Stomach (tissue), 19 donors: ENCODE measurements at regions of chr17 and their contacts with region 1.

Region 1: GRCh38 chr17:34163646-34164045 is 91.4 kb upstream of the CCL2 start:
- DNase-seq: peak in 1 of 2 donors; percentile 61
- H3K4me3 ChIP-seq: no peak overlapping the region
- H3K27ac ChIP-seq: peak overlapping the region in 1 of 5 donors; percentile 64
- H3K4me1 ChIP-seq: peaks cover 0 to 15% (median 10%) of the 10 kb centered on the region in 4 donors
- H3K27me3 ChIP-seq: peaks cover 0 to 69% (median 7%) of the 10 kb centered on the region in 3 donors
- CTCF ChIP-seq: peak in 4 of 7 experiments; percentile 10 to 23 (median 16)
- EP300 ChIP-seq: no peak
- POLR2A ChIP-seq: no peak

Region 2: DNA sequence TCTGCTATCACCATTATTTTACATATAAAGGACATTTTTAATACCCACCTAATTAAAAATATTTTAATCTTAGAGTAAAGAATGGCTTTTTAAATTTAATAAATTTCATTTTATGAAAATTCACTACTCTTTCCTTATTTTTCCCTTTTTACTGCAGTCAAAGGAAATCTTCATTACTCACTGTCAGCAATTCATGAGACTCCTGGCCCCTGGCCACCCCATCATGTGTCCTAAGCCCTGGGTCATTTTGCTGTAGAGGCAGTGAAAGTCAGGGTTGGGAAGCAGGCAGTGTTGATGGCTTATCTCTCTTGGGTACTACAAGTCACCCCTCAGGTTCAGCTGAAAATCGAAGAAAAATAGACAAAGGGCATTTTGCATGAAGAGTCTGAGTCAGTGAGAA is 377.2 kb before region 1 on chr17:
- intact Hi-C with region 1: loop called (anchors 10 kb)
- DNase-seq: no peak
- H3K4me3 ChIP-seq: no peak overlapping the region
- H3K27ac ChIP-seq: no peak overlapping the region
- H3K4me1 ChIP-seq: no peaks in the 10 kb centered on the region
- H3K27me3 ChIP-seq: peaks cover 0 to 28% (median 0%) of the 10 kb centered on the region in 3 donors
- CTCF ChIP-seq: no peak
- EP300 ChIP-seq: no peak
- POLR2A ChIP-seq: no peak

Region 3: GRCh38 chr17:33990943-33991706 is 172.5 kb before region 1 on chr17:
- intact Hi-C with region 1: no loop called
- DNase-seq: no peak
- H3K4me3 ChIP-seq: no peak overlapping the region
- H3K27ac ChIP-seq: no peak overlapping the region
- H3K4me1 ChIP-seq: peaks cover 0 to 9% (median 3%) of the 10 kb centered on the region in 4 donors
- H3K27me3 ChIP-seq: no peaks in the 10 kb centered on the region
- CTCF ChIP-seq: no peak
- EP300 ChIP-seq: no peak
- POLR2A ChIP-seq: no peak